ENCODE measurements at regions of chr5 and their contacts with region 1.

Region 1: GRCh38 chr5:141960449-141961202 is 2.6 kb upstream of the PCDH12 start:
- DNase-seq: peak; percentile 95
- H3K4me3 Mint-ChIP-seq: peak overlapping the region; percentile 46
- H3K27ac Mint-ChIP-seq: peak overlapping the region; percentile 95
- H3K4me1 Mint-ChIP-seq: peaks cover 53% of the 10 kb centered on the region
- H3K27me3 Mint-ChIP-seq: no peaks in the 10 kb centered on the region

Region 2: GRCh38 chr5:141691867-141692532 is 268.6 kb before region 1 on chr5:
- CTCF ChIA-PET with region 1: interaction called, 90 read pairs
- POLR2A ChIA-PET with region 1: interaction called, 3 read pairs
- DNase-seq: peak; percentile 85
- H3K4me3 Mint-ChIP-seq: peak overlapping the region; percentile 55
- H3K27ac Mint-ChIP-seq: peak overlapping the region; percentile 54
- H3K4me1 Mint-ChIP-seq: peaks cover 31% of the 10 kb centered on the region
- H3K27me3 Mint-ChIP-seq: peaks cover 28% of the 10 kb centered on the region

Region 3: DNA sequence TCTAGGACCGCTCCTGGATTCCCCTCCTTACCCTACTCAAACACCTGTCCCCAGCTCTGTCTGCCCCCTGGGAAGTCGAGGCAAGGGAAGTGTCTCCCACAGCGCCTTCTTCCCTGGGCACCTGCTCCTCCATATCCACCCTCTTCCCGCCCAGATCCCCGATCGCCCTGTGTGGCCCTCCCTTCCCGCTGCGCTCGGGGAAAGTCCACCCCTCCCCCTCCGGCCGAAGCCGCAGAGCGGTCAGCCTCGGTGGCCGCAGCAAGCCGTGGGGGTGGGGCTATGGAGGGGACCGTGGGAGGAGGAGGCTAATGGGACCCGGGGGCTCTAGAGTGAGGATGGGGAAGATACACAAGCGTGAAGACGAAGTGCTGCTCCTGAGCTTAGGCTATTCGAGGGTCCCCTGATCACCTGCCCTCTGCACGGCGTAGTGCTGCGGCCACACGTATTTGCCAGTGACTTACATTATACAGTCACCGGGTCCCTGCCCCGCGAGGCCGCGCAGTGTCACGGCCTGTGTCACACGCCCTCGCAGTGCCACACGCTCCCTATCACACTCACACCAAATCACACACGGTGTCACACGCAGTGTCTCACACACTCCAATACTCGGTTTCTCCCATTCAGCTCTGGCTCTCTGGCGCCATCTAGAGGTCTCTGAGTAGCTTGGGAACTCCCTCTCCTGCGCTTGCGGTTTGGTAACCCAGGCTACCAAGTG is 81.8 kb before region 1 on chr5:
- CTCF ChIA-PET with region 1: interaction called, 16 read pairs
- POLR2A ChIA-PET with region 1: interaction called, 4 read pairs
- DNase-seq: peak; percentile 93
- H3K4me3 Mint-ChIP-seq: peak overlapping the region; percentile 37
- H3K27ac Mint-ChIP-seq: no peak overlapping the region
- H3K4me1 Mint-ChIP-seq: peaks cover 21% of the 10 kb centered on the region
- H3K27me3 Mint-ChIP-seq: peaks cover 78% of the 10 kb centered on the region

Region 4: DNA sequence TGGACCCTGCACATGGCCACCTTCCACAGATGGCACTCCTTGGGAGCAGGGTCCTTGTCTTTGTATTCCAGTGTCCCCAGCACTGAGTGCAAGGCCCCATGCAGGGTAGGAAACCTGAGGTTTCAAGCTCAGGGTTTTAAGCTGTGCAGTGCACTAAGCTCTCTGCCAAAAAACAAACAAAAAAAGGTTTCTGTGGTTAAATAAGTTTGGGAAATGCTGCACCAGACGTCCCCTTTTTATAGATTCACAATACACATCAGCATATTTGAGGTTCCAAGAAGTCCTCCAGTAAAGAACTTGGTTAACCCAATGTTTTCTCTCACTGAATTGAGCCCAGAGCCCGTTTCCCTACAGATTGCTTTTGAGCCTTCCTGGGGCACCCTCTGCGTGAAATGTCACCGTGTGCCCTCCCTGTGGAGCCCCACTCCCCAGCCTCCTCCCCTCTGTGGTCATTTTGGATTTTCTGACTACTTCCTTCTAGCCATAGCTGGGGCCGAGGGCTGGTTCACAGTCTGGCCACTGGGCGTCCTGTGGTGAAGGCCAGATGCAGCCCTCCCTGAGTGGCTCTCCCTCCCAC is 19.8 kb before region 1 on chr5:
- CTCF ChIA-PET with region 1: interaction called, 93 read pairs
- POLR2A ChIA-PET with region 1: no interaction called
- DNase-seq: no peak
- H3K4me3 Mint-ChIP-seq: no peak overlapping the region
- H3K27ac Mint-ChIP-seq: peak overlapping the region; percentile 66
- H3K4me1 Mint-ChIP-seq: peaks cover 12% of the 10 kb centered on the region
- H3K27me3 Mint-ChIP-seq: no peaks in the 10 kb centered on the region

Region 5: GRCh38 chr5:142012186-142012785 is 51.7 kb after region 1 on chr5:
- CTCF ChIA-PET with region 1: interaction called, 22 read pairs
- POLR2A ChIA-PET with region 1: no interaction called
- DNase-seq: peak; percentile 57
- H3K4me3 Mint-ChIP-seq: peak overlapping the region; percentile 78
- H3K27ac Mint-ChIP-seq: peak overlapping the region; percentile 85
- H3K4me1 Mint-ChIP-seq: peaks cover 84% of the 10 kb centered on the region
- H3K27me3 Mint-ChIP-seq: no peaks in the 10 kb centered on the region

Region 6: GRCh38 chr5:142079306-142079721 is 118.7 kb after region 1 on chr5:
- CTCF ChIA-PET with region 1: no interaction called
- POLR2A ChIA-PET with region 1: no interaction called
- DNase-seq: no peak
- H3K4me3 Mint-ChIP-seq: no peak overlapping the region
- H3K27ac Mint-ChIP-seq: no peak overlapping the region
- H3K4me1 Mint-ChIP-seq: peaks cover 5% of the 10 kb centered on the region
- H3K27me3 Mint-ChIP-seq: peaks cover 4% of the 10 kb centered on the region

Measured in activated CD4-positive, alpha-beta T cell treated with anti-CD3 and anti-CD28 coated beads, Interleukin-2, amount 10 ng/mL, durations not matched to agents 7 days and 5 days (primary cell).